Body of pancreas (tissue), 4 donors: ENCODE measurements at regions of chr10 and their contacts with region 1.

Region 1: GRCh38 chr10:116385994-116386809 is 41.4 kb upstream of the PNLIPRP3 start:
- DNase-seq: peak in 1 of 4 donors; percentile 15
- ATAC-seq: peak; percentile 58
- H3K4me3 ChIP-seq: no peak overlapping the region
- H3K27ac ChIP-seq: no peak overlapping the region
- H3K4me1 ChIP-seq: no peaks in the 10 kb centered on the region
- H3K27me3 ChIP-seq: no peaks in the 10 kb centered on the region
- CTCF ChIP-seq: peak in 6 of 7 experiments; percentile 31 to 72 (median 63)
- POLR2A ChIP-seq: no peak

Region 2: GRCh38 chr10:115355162-115355760 is 1030.9 kb before region 1 on chr10:
- intact Hi-C with region 1: loop called (anchors 10 kb)
- DNase-seq: peak; percentile 42 to 59 (median 50)
- ATAC-seq: peak; percentile 50
- H3K4me3 ChIP-seq: no peak overlapping the region
- H3K27ac ChIP-seq: no peak overlapping the region
- H3K4me1 ChIP-seq: no peaks in the 10 kb centered on the region
- H3K27me3 ChIP-seq: no peaks in the 10 kb centered on the region
- CTCF ChIP-seq: peak; percentile 44 to 84 (median 74)
- POLR2A ChIP-seq: no peak

Region 3: DNA sequence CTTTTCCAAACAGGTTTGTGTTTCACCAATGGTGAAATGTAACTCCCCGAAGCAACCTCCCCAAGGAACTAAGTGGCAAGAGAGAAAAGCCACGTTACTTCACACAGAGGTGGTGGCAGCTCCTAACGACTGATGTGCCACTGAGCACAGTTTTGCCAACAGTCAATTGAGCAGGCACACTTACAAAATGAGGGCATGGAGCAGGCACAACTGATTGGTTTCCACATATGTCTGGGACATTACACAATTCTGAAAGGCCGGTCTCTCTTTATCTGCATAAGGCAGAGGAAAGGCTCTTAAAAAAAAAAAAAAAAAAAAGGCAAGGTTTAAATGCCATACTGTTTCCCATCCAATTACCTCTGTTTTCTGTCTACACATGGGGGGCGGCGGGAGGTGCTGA is 199.9 kb before region 1 on chr10:
- intact Hi-C with region 1: no loop called
- DNase-seq: no peak
- ATAC-seq: no peak
- H3K4me3 ChIP-seq: no peak overlapping the region
- H3K27ac ChIP-seq: no peak overlapping the region
- H3K4me1 ChIP-seq: no peaks in the 10 kb centered on the region
- H3K27me3 ChIP-seq: no peaks in the 10 kb centered on the region
- CTCF ChIP-seq: no peak
- POLR2A ChIP-seq: no peak